Endothelial cell of umbilical vein (primary cell): ENCODE measurements at regions of chr4 and their contacts with region 1.

Region 1: DNA sequence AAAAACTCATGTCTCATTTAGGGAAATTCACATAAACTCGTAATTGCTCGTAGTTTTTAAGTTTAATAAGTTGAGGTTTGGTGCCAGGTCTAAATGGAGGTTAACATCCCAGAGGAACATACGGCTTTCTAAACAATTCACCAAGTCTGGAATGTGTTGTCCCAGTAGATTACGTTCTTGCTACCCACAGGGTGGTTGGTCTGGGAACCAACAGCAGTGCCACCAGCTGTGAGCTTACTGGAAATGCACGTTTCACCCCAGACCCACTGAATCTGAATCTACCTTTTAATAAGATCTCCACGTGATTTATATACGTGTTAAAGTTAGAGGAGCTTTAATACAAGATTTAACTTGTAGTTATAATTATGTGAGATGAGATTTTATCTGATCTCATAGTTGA is 134.3 kb downstream of the BMPR1B start:
- DNase-seq: peak; percentile 10
- H3K4me3 ChIP-seq: no peak overlapping the region
- H3K27ac ChIP-seq: no peak overlapping the region
- H3K4me1 ChIP-seq: peaks cover 5% of the 10 kb centered on the region
- H3K27me3 ChIP-seq: no peaks in the 10 kb centered on the region
- CTCF ChIP-seq: no peak
- POLR2A ChIP-seq: no peak

Region 2: GRCh38 chr4:94877973-94878372 is 14.1 kb before region 1 on chr4:
- CTCF ChIA-PET with region 1: interaction called, 6 read pairs
- POLR2A ChIA-PET with region 1: no interaction called
- dilution Hi-C with region 1: no loop called
- intact Hi-C with region 1: loop called (anchors 2 kb)
- DNase-seq: no peak
- H3K4me3 ChIP-seq: no peak overlapping the region
- H3K27ac ChIP-seq: no peak overlapping the region
- H3K4me1 ChIP-seq: no peaks in the 10 kb centered on the region
- H3K27me3 ChIP-seq: no peaks in the 10 kb centered on the region
- CTCF ChIP-seq: no peak
- POLR2A ChIP-seq: no peak